A549 (cell line): ENCODE measurements at regions of chr1 and their contacts with region 1.

Region 1: DNA sequence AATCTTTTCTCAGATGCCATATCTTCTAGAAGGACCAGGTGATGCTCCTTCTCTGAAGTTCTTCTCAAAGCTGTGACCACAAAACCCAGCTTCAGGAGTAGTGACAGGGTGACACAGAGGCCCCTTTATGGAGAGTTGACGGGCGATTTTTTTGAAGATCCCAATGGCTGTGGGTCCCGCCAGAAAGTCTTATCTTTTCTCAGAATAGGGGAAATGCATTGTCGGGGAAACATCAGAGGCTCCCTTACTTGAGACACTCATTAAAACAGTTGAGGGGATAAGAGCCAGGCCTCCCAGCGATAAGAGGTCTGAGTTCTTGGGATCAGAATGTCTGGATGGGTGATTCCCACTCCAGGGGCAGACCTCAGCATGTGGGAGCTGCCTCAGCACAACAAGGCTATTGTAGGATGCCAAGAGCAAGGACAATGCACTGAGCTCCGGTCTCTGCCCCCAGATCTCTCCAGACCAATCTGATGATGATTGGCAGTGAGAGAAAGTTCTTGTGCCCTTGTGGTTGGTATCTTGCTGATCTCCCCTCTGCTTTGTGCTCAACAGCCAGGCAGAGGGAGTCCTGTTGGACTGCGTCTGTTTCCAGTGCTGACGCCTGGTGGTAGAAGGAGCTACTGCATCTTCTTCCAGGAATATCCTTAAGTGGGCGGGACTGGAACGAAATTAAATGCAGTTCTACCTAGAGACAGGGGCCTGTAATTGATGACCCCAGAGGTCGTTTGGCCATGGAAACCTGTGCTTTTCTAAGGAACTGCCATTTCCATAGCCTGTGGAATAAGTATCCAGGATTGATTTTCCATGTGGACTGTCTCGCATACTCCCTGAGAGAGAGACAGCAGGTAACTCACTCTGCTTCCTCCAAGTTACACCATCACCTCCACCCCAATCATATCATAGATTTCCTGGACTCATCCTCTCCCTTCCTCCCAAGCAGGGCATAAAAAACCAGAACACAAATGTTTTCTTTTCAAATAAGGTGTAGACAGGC is 6.8 kb upstream of the ACKR1 start:
- DNase-seq: peak; percentile 57 to 75
- ATAC-seq: peak; percentile 84 to 95
- H3K4me3 ChIP-seq: no peak overlapping the region
- H3K27ac ChIP-seq: no peak overlapping the region
- H3K4me1 ChIP-seq: no peaks in the 10 kb centered on the region
- CTCF ChIP-seq: peak; percentile 73
- EP300 ChIP-seq: no peak
- POLR2A ChIP-seq: no peak
- RAD21 ChIP-seq: peak; percentile 54 to 58

Region 2: GRCh38 chr1:159132271-159132881 is 65.5 kb before region 1 on chr1:
- CTCF ChIA-PET with region 1: interaction called, 30 read pairs
- POLR2A ChIA-PET with region 1: no interaction called
- DNase-seq: peak; percentile 59 to 61
- ATAC-seq: peak; percentile 68 to 81; a peak in 3 of 6 replicates
- H3K4me3 ChIP-seq: no peak overlapping the region
- H3K27ac ChIP-seq: no peak overlapping the region
- H3K4me1 ChIP-seq: no peaks in the 10 kb centered on the region
- CTCF ChIP-seq: peak; percentile 88
- EP300 ChIP-seq: no peak
- POLR2A ChIP-seq: no peak
- RAD21 ChIP-seq: peak; percentile 84 to 85

Region 3: DNA sequence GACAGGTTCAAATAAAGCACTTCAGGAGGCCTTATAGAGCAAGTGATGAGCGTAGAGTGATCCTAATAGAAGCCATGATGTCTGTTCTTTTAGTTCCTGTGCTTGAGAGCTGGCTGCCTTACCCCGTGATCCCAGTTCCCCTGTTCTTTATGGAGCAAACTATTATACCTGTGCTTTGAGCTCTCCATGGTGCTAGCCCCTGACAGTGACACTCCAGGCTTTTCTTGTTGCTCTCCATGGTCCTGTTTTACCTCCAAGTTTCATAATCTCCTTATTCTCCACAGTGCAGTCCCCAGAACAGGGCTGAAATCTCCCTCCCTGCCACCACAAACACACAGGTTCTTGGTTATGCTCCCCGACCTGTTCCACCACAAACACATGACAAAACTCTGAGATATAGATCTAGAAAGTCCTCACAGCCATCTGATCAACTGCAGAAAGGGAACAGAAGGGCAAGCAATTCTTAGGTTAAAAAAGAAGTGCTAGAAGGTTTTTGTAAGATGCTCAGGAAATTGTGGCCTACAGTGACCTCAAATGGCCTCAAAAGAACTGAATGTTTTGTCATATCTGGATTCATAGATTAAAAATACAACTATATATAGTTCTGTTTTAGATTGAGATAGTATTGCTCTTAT is 20.5 kb before region 1 on chr1:
- CTCF ChIA-PET with region 1: interaction called, 11 read pairs
- POLR2A ChIA-PET with region 1: no interaction called
- DNase-seq: peak; percentile 40 to 60
- ATAC-seq: peak; percentile 71 to 81
- H3K4me3 ChIP-seq: no peak overlapping the region
- H3K27ac ChIP-seq: no peak overlapping the region
- H3K4me1 ChIP-seq: peaks cover 5% of the 10 kb centered on the region; the same call in 2 of the 3 replicates
- CTCF ChIP-seq: no peak
- EP300 ChIP-seq: no peak
- POLR2A ChIP-seq: no peak
- RAD21 ChIP-seq: no peak

Region 4: GRCh38 chr1:159184201-159184600 is 13.7 kb before region 1 on chr1:
- CTCF ChIA-PET with region 1: interaction called, 12 read pairs
- POLR2A ChIA-PET with region 1: no interaction called
- DNase-seq: no peak
- ATAC-seq: no peak
- H3K4me3 ChIP-seq: no peak overlapping the region
- H3K27ac ChIP-seq: no peak overlapping the region
- H3K4me1 ChIP-seq: no peaks in the 10 kb centered on the region
- CTCF ChIP-seq: no peak
- EP300 ChIP-seq: no peak
- POLR2A ChIP-seq: no peak
- RAD21 ChIP-seq: no peak